GM10248 (cell line): ENCODE measurements at regions of chr3 and their contacts with region 1.

Region 1: DNA sequence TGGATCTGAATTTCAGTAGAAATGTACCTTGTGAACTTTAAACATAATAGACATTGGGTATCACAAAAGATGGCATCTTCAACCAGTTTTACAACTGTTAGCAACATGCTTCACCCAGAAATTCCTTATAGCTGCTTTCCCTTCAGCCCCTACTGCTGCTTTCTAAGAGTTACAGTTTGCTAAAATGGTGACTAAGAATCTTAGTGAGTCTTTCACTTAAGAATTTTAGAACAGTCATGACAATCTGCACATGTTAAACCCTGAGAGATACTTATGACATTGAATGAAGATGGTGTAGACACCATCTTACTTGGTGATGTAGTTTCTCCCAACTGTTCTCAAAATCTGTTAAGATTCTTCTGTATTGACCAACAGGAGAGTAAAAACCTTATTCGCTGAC is 129.7 kb upstream of the UBE2E1 start:
- DNase-seq: no peak
- CTCF ChIP-seq: no peak

Region 2: GRCh38 chr3:23461069-23461468 is 215.0 kb before region 1 on chr3:
- CTCF ChIA-PET with region 1: no interaction called
- POLR2A ChIA-PET with region 1: no interaction called
- DNase-seq: no peak
- CTCF ChIP-seq: no peak

Region 3: DNA sequence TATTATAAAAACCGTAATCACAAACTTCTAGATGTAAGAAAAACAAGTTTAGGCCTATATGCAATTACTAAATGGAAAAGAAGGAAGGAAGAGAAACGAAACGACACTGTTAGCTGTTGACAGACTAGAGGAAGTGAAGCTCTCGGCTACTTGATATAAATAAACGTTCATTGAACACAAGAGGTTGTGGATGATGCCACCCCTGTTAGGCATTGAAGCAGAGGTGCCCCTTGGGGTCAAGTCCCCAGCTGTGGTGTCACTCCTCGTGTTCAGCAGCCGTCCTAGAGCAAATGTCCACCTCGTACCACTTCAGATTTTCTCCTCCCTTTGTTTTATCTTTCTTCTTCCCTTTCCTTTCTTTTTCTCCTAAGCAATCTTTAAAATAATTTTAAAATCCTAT is 16.8 kb before region 1 on chr3:
- CTCF ChIA-PET with region 1: interaction called, 20 read pairs
- POLR2A ChIA-PET with region 1: no interaction called
- DNase-seq: peak; percentile 42
- CTCF ChIP-seq: no peak

Region 4: DNA sequence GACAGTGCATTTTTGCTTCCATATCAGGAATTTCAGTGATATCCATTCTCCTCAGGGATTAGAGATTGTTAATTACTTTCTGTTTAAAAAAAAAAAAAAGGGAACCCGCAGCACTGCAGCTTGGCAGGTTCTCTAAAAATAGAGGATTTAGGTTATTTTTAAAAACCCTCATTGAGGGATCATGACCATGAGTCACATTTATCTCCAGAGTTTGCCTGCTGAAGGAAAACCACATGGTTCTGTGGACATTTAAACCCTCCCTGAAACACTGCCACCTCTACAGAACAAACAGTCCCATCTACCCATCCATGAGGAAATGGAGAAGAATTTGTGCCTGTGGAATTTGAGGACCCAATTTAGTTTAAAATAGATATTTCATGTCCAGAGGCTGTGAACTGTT is 63.4 kb after region 1 on chr3:
- CTCF ChIA-PET with region 1: no interaction called
- POLR2A ChIA-PET with region 1: no interaction called
- DNase-seq: no peak
- CTCF ChIP-seq: no peak

Region 5: DNA sequence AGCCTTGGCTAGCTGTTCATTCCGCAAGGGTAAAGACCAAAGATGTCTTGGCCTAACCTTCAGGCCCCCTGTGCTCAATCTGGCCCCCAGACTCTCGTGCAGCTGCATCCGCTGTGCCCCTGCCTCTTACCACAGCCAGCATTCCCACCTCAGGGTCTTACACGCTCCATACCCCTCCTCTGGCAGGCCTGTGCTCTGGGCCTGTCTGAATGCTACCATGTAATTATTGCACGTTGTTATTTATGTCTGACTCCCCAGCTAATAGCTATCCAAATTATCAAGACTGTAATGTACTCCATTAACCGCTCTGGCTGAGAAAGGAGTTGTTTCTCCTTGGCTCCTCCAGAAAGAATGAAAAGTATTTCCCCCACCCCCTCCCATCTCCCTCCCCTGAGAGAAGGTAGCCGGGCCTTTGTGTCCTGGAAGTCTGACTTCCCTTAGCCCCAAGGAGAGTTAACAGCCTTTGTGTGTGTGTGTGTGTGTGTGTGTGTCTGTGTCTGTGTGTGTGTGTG is 75.2 kb after region 1 on chr3:
- CTCF ChIA-PET with region 1: no interaction called
- POLR2A ChIA-PET with region 1: no interaction called
- DNase-seq: no peak
- CTCF ChIP-seq: no peak